Psoas muscle (tissue), 8 donors: ENCODE measurements at regions of chr15 and their contacts with region 1.

Region 1: DNA sequence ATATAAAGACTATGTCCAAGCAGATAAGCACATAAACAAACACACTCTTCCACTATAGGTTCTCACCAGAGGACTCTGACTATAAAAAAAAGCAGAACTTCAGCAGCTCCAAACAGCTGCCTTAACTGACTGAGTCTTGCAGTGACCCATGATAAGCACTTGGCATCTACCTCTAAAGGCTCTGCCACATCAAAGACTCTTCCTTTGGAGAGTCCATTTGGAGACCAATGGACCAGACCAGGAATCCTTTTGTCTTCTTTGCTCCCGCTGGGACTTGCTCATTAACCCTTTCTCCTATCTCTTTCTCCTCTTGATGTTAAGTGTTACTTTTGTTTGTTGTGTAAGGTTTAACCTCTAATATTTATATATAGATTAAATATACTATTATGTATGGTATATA is 424.1 kb downstream of the RSL24D1 start:
- DNase-seq: no peak
- ATAC-seq: no peak
- H3K4me3 ChIP-seq: no peak overlapping the region
- H3K27ac ChIP-seq: no peak overlapping the region
- H3K4me1 ChIP-seq: no peaks in the 10 kb centered on the region
- H3K27me3 ChIP-seq: no peaks in the 10 kb centered on the region
- CTCF ChIP-seq: no peak

Region 2: DNA sequence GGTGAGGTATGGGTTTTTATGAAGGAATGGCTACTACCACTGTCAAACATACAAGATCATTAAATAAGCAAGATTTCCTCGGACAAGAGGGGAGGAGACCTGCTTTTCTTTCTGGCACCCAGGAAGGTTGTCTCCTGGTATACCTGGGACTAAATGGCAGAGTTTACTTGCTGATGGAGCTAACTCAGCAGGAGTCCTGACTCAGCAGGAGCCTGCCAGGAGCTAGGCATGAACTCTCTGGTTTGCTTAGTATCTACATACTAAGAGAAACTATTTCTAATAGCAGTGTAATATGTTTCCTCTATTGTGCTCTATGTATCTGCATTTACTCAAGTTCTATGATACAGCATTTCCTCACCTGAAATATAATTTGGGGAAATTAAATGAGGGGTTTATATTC is 19.9 kb after region 1 on chr15:
- intact Hi-C with region 1: loop called in 1 of 2 experiments (anchors 2 kb)
- DNase-seq: no peak
- ATAC-seq: no peak
- H3K4me3 ChIP-seq: no peak overlapping the region
- H3K27ac ChIP-seq: no peak overlapping the region
- H3K4me1 ChIP-seq: no peaks in the 10 kb centered on the region
- H3K27me3 ChIP-seq: no peaks in the 10 kb centered on the region
- CTCF ChIP-seq: no peak

Region 3: GRCh38 chr15:55151631-55152030 is 379.0 kb after region 1 on chr15:
- intact Hi-C with region 1: no loop called
- DNase-seq: no peak
- ATAC-seq: no peak
- H3K4me3 ChIP-seq: no peak overlapping the region
- H3K27ac ChIP-seq: no peak overlapping the region
- H3K4me1 ChIP-seq: no peaks in the 10 kb centered on the region
- H3K27me3 ChIP-seq: no peaks in the 10 kb centered on the region
- CTCF ChIP-seq: no peak